GM10248 (cell line): ENCODE measurements at regions of chr7 and their contacts with region 1.

Region 1: GRCh38 chr7:141533149-141533949 is 17.9 kb upstream of the AGK start:
- DNase-seq: peak; percentile 69
- CTCF ChIP-seq: peak; percentile 98

Region 2: GRCh38 chr7:140517546-140518369 is 1015.6 kb before region 1 on chr7:
- CTCF ChIA-PET with region 1: interaction called, 10 read pairs
- POLR2A ChIA-PET with region 1: no interaction called
- DNase-seq: peak; percentile 83
- CTCF ChIP-seq: peak; percentile 85

Region 3: DNA sequence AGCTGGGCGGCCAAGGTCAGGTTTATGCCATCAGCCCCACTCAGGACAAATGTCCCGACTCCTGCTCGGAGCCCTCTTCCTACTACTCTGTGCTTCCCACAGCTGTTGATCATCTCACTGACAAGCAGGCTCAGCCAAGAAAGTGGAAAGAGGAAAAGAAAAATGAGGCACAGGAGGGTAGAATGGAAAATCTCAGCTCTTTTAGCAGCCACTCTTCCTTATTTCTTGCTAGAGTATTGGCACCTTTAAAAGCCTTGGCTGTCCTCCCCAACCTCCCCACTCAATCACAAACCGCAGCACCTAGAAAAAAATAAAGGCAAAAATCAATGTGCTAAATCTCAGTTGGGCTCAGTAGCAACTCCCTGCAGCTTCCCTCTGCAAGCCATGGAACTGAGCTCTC is 17.4 kb before region 1 on chr7:
- CTCF ChIA-PET with region 1: interaction called, 57 read pairs
- POLR2A ChIA-PET with region 1: no interaction called
- DNase-seq: no peak
- CTCF ChIP-seq: no peak

Region 4: GRCh38 chr7:141522657-141523342 is 10.5 kb before region 1 on chr7:
- CTCF ChIA-PET with region 1: interaction called, 57 read pairs
- POLR2A ChIA-PET with region 1: no interaction called
- DNase-seq: no peak
- CTCF ChIP-seq: no peak

Region 5: GRCh38 chr7:141551094-141551781 is 17.9 kb after region 1 on chr7 and contains the start of gene AGK:
- CTCF ChIA-PET with region 1: interaction called, 35 read pairs
- POLR2A ChIA-PET with region 1: no interaction called
- DNase-seq: peak; percentile 85
- CTCF ChIP-seq: no peak

Region 6: DNA sequence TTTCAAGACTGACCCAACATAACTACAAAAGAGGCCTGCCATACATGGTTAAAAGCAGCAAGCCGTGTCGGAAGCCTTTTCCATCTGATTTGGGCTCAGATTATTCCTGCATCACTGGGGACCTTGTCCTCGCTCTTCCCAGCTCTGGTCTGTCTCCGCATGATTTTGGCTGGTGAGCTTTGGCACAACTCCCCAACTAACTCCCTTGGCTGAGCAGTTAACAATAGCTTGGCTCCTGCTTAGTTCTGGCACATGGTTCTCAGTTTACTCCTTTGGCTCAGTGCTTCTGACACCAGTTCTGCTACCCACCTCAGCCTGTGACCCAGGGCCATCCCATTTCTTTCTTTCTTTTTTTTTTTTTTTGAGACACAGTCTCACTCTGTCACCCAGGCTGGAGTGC is 34.9 kb after region 1 on chr7:
- CTCF ChIA-PET with region 1: no interaction called
- POLR2A ChIA-PET with region 1: no interaction called
- DNase-seq: no peak
- CTCF ChIP-seq: no peak

Region 7: DNA sequence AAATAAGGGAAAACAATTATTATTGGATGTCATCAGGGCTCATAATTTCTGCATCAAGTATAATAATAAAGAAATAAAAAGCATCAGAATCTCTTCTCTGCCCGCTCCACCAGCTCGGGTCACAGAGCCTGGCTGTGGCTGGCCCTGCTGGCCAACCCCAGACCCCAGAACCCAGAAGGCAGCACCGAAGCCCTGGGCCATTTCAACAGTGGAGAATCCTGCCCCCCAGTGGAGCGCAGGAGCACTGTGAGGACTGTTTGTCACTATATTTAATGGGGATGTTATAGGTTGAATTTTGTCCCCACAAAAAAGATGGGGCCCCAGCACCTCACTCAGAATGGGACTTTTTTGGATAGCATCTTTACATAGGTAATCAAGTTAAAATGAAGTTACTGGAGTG is 141.4 kb after region 1 on chr7:
- CTCF ChIA-PET with region 1: no interaction called
- POLR2A ChIA-PET with region 1: no interaction called
- DNase-seq: no peak
- CTCF ChIP-seq: peak; percentile 7